ENCODE measurements at regions of chr3 and their contacts with region 1.

Region 1: GRCh38 chr3:74532446-74532845 is 82.0 kb downstream of the CNTN3 start:
- DNase-seq: no peak
- H3K4me3 Mint-ChIP-seq: no peak overlapping the region
- H3K27ac Mint-ChIP-seq: no peak overlapping the region
- H3K4me1 Mint-ChIP-seq: no peaks in the 10 kb centered on the region
- H3K27me3 Mint-ChIP-seq: no peaks in the 10 kb centered on the region

Region 2: DNA sequence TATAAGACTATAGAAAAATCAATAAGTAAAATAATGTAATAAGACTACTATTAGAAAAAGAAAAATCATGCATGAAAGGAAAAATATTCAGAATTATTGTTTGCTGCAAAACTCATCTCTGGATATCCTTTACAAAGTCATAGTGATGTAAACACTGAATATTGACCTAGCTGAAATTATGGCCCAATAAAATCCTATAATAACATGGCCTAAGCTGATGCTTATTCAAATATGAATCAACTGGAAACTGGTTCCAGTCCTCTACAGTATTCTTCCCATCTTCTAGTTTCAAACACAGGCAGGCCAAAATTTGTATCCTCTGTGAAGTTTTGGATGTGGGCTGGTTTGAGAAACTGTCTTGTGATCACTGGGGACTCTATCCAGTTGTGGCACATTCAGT is 52.5 kb before region 1 on chr3:
- intact Hi-C with region 1: loop called (anchors 1 kb)
- DNase-seq: no peak
- H3K4me3 Mint-ChIP-seq: no peak overlapping the region
- H3K27ac Mint-ChIP-seq: no peak overlapping the region
- H3K4me1 Mint-ChIP-seq: no peaks in the 10 kb centered on the region
- H3K27me3 Mint-ChIP-seq: no peaks in the 10 kb centered on the region